ENCODE measurements at regions of chr11 and their contacts with region 1.

Region 1: DNA sequence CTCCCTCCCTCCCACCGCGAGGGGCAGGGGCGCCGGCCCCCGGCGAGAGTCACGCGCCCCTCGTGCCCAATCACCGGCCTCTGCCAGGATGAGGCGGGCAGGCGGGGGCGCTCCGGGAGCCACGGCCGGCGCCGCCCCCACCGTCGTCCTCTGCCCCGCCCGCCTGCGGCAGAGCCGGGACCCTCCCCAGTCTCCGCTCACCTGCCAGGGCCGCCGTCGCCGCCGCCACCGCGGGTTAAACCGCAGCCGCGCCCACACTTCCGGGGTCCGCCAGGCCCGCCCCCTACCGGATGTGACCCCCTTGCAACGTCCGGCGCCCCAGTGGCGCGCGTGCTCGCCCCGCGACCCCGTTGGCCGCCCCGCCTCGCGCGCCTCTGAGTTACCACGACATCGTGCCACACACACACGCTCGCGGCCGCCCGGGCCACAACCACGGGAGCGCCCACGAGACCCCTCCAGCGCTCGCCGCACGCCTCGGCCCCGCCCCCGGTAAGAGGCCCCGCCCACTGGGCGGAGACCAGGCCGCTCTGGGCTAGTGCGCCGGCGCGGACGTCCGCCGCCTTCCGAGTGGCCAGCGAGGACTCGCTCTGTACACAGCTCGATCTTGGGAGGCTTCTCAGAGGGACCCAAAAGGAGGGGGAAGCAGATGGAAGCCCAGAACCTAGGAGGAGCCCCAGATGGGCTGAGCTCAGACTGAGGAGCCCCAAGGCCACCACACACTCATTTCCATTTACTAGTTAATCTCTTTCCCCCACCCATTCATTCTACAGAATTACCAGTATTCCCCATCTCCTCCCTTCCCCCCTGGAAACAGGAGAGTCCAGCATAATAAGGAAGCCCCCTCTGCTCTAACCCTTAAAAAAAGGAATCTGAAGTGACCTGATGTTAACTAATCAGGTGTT is at the start of gene VPS37C:
- DNase-seq: peak; percentile 87 to 96 (median 90)
- ATAC-seq: peak; percentile 97 to 98 (median 98)
- H3K4me3 ChIP-seq: peak within 1 kb of the TSS; percentile 66 to 97 (median 82)
- H3K27ac ChIP-seq: peak within 1 kb of the TSS; percentile 90 to 99 (median 98)
- H3K4me1 ChIP-seq: peaks cover 0 to 67% (median 23%) of the 10 kb centered on the region in 12 donors
- H3K27me3 ChIP-seq: no peaks in the 10 kb centered on the region
- CTCF ChIP-seq: peak in 8 of 12 donors; percentile 13 to 57 (median 32)
- POLR2A ChIP-seq: peak in 1 of 2 donors; percentile 70
- total RNA-seq, gene VPS37C: 11.4 to 27.6 (median 17.1) TPM

Region 2: GRCh38 chr11:61102667-61103571 is 58.5 kb before region 1 on chr11:
- intact Hi-C with region 1: loop called in 1 of 10 experiments (anchors 10 kb)
- DNase-seq: no peak
- ATAC-seq: peak in 1 of 4 donors; percentile 44
- H3K4me3 ChIP-seq: peak overlapping the region in 3 of 12 donors; percentile 12 to 57 (median 25)
- H3K27ac ChIP-seq: peak overlapping the region in 1 of 12 donors; percentile 74
- H3K4me1 ChIP-seq: no peaks in the 10 kb centered on the region
- H3K27me3 ChIP-seq: no peaks in the 10 kb centered on the region
- CTCF ChIP-seq: no peak
- POLR2A ChIP-seq: no peak